PC-9 (cell line): ENCODE measurements at regions of chr7 and their contacts with region 1.

Region 1: DNA sequence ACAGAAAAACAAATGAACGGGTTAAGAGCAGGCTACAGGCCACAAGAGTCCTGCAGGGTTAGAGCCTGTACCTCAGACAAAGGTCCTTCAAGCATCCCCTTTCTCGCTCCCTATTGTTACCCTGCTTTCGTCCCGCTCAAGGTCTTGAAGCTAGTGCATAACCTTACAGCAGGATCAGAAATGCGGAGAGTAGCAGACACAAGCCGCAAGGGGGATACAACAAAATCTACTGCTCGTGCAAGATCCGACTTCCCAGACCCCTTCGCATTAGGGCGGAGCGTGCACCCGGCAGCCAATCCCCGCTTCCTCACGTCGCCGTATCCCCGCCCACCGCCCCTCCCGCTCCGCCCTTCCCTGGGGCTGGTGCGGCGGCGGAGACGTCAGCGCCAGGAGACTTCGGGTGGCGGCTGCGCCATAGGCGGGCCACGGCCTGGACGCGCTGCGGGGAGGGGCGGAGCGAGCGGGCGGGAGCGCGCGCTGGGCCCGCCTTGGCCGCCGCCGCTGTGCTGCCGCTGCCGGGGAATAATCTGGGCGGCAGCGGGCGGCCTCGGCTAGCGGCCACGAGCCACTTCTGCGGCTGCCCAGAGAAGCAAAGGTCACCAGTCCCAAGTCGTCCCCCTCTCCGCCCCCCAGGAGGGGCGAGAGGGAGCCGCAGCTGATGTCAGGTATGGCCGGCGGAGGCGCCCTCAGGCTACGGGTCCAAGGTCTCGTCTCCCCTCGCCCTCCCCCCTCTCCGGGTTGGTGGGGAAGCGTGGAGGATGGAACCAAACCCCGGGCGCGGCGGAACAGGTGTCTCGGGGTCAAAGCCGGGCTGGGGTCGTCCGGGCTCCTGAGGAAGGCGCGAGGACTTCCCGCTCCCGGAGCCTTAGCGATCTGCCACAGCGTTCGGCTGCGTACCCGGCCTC is at the start of gene C1GALT1:
- DNase-seq: peak; percentile 95 to 99
- H3K4me3 ChIP-seq: peak within 1 kb of the TSS; percentile 67
- H3K27ac ChIP-seq: peak within 1 kb of the TSS; percentile 88
- H3K4me1 ChIP-seq: peaks cover 42% of the 10 kb centered on the region
- H3K27me3 ChIP-seq: no peaks in the 10 kb centered on the region
- CTCF ChIP-seq: peak; percentile 43; the same call in 1 of the 2 replicates
- total RNA-seq, gene C1GALT1: 44.7 and 54.2 TPM in 2 replicates

Region 2: GRCh38 chr7:7090460-7090859 is 91.9 kb before region 1 on chr7:
- CTCF ChIA-PET with region 1: no interaction called
- POLR2A ChIA-PET with region 1: no interaction called
- intact Hi-C with region 1: no loop called
- DNase-seq: no peak
- H3K4me3 ChIP-seq: no peak overlapping the region
- H3K27ac ChIP-seq: no peak overlapping the region
- H3K4me1 ChIP-seq: no peaks in the 10 kb centered on the region
- H3K27me3 ChIP-seq: no peaks in the 10 kb centered on the region
- CTCF ChIP-seq: no peak

Region 3: GRCh38 chr7:7265081-7265686 is 82.8 kb after region 1 on chr7:
- CTCF ChIA-PET with region 1: interaction called, 3 read pairs
- POLR2A ChIA-PET with region 1: no interaction called
- intact Hi-C with region 1: loop called (anchors 5 kb)
- DNase-seq: no peak
- H3K4me3 ChIP-seq: no peak overlapping the region
- H3K27ac ChIP-seq: no peak overlapping the region
- H3K4me1 ChIP-seq: peaks cover 10% of the 10 kb centered on the region
- H3K27me3 ChIP-seq: no peaks in the 10 kb centered on the region
- CTCF ChIP-seq: no peak

Region 4: GRCh38 chr7:7416031-7416858 is 233.8 kb after region 1 on chr7:
- CTCF ChIA-PET with region 1: interaction called, 4 read pairs
- POLR2A ChIA-PET with region 1: interaction called, 4 read pairs
- intact Hi-C with region 1: loop called (anchors 1 kb)
- DNase-seq: peak; percentile 87 to 100
- H3K4me3 ChIP-seq: no peak overlapping the region
- H3K27ac ChIP-seq: peak overlapping the region; percentile 84
- H3K4me1 ChIP-seq: peaks cover 36% of the 10 kb centered on the region
- H3K27me3 ChIP-seq: no peaks in the 10 kb centered on the region
- CTCF ChIP-seq: no peak

Region 5: GRCh38 chr7:7428806-7429205 is 246.4 kb after region 1 on chr7:
- CTCF ChIA-PET with region 1: no interaction called
- POLR2A ChIA-PET with region 1: no interaction called
- intact Hi-C with region 1: no loop called
- DNase-seq: no peak
- H3K4me3 ChIP-seq: no peak overlapping the region
- H3K27ac ChIP-seq: no peak overlapping the region
- H3K4me1 ChIP-seq: no peaks in the 10 kb centered on the region
- H3K27me3 ChIP-seq: no peaks in the 10 kb centered on the region
- CTCF ChIP-seq: no peak

Region 6: GRCh38 chr7:7542251-7542835 is 359.9 kb after region 1 on chr7:
- CTCF ChIA-PET with region 1: no interaction called
- POLR2A ChIA-PET with region 1: no interaction called
- intact Hi-C with region 1: loop called (anchors 2 kb)
- DNase-seq: no peak
- H3K4me3 ChIP-seq: no peak overlapping the region
- H3K27ac ChIP-seq: no peak overlapping the region
- H3K4me1 ChIP-seq: peaks cover 15% of the 10 kb centered on the region
- H3K27me3 ChIP-seq: no peaks in the 10 kb centered on the region
- CTCF ChIP-seq: no peak

Region 7: DNA sequence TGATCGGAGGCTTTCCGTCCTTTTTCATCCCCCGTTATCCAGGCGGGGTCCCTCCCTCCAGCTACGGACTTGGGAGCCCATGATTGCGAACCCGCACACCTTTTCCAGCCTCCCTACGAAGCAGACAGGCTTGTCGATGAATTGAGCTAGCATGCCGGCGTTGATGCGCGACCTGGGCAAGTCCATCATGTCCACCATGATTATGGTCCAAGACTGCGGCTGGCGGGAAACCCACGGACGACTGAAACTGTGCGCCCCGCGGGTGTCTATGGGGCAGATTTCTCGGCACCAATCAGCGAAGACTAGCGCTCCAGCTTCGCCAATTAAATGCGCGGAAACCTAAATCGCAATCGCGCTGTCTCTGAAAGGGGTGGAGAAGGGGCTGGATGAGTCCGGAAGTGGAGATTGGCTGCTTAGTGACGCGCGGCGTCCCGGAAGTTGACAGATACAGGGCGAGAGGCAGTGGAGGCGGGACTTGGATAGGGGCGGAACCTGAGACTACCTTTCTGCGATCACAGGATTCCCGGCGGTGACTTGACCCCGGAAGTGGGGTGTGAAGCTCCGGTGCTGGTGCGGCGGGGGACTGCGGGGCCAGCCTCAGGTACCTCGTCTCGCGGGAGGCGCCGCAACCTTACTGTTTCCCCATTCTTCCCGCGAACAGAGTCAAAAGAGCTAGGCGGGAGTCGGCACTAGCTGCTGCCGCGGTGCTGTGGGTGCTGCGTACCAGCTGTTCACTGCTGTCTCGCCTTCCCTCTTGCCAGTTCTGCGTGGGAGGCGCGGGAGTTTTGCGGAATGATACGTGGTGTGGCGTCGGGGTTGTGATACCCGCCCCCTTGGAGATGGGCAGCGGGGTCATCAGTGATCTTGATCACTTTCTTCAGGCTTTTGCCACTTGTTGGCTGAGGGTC is 458.1 kb after region 1 on chr7 and contains the start of gene UMAD1:
- CTCF ChIA-PET with region 1: no interaction called
- POLR2A ChIA-PET with region 1: no interaction called
- intact Hi-C with region 1: loop called (anchors 2 kb)
- DNase-seq: peak; percentile 99
- H3K4me3 ChIP-seq: peak within 1 kb of the TSS; percentile 83
- H3K27ac ChIP-seq: peak within 1 kb of the TSS; percentile 58
- H3K4me1 ChIP-seq: peaks cover 27% of the 10 kb centered on the region
- H3K27me3 ChIP-seq: no peaks in the 10 kb centered on the region
- CTCF ChIP-seq: no peak
- total RNA-seq, gene UMAD1: 15.5 and 20.5 TPM in 2 replicates